ENCODE measurements at regions of chr4 and their contacts with region 1.

Region 1: DNA sequence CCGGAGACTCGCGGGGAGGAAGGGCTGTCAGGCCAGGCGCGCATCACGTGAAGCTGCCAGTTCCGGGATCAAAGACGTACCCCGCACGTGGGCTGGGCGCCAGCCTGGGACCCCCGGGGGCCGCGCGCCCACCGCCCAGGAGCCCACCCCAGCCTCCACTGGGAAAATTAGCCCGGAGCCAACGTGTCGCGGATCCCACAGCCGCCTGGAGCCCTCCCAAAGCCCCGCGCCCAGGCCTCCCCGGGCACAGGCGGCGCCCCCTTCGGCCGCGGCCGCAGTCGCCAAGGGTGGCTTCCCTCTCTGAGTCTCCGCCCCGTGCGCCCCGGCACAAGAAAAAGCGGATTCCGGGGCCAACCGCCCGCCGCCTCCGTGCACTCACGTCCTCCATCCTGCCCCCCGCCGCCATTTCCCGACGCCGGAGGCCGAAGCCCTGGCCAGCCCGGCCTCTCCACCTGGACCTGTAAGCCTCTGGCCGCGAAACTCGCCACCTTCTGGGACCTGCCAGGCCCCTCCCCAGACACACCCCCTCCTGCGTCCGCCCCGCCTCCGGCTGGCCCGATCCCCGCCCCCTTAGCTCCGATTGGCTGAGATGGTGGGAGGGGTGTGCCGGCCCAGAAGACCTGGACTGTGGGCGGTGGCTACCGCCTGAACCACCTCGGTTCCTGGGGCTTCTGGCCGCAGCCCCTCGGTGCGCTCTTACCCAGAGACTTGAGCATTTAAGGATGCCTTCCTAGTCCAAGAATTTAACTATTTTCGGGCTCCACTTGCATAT is at the start of gene TMEM192:
- DNase-seq: peak; percentile 92
- H3K4me3 Mint-ChIP-seq: peak within 1 kb of the TSS; percentile 85
- H3K27ac Mint-ChIP-seq: peak within 1 kb of the TSS; percentile 79
- H3K4me1 Mint-ChIP-seq: peaks cover 18% of the 10 kb centered on the region
- H3K27me3 Mint-ChIP-seq: peaks cover 11% of the 10 kb centered on the region
- total RNA-seq, gene TMEM192: 6.2 to 6.4 TPM

Region 2: GRCh38 chr4:164997324-164997723 is 115.2 kb before region 1 on chr4:
- CTCF ChIA-PET with region 1: no interaction called
- POLR2A ChIA-PET with region 1: no interaction called
- DNase-seq: no peak
- H3K4me3 Mint-ChIP-seq: no peak overlapping the region
- H3K27ac Mint-ChIP-seq: no peak overlapping the region
- H3K4me1 Mint-ChIP-seq: no peaks in the 10 kb centered on the region
- H3K27me3 Mint-ChIP-seq: peaks cover 19% of the 10 kb centered on the region

Region 3: GRCh38 chr4:165096776-165097175 is 15.8 kb before region 1 on chr4:
- CTCF ChIA-PET with region 1: interaction called, 17 read pairs
- POLR2A ChIA-PET with region 1: interaction called, 3 read pairs
- DNase-seq: no peak
- H3K4me3 Mint-ChIP-seq: no peak overlapping the region
- H3K27ac Mint-ChIP-seq: no peak overlapping the region
- H3K4me1 Mint-ChIP-seq: no peaks in the 10 kb centered on the region
- H3K27me3 Mint-ChIP-seq: no peaks in the 10 kb centered on the region

Region 4: DNA sequence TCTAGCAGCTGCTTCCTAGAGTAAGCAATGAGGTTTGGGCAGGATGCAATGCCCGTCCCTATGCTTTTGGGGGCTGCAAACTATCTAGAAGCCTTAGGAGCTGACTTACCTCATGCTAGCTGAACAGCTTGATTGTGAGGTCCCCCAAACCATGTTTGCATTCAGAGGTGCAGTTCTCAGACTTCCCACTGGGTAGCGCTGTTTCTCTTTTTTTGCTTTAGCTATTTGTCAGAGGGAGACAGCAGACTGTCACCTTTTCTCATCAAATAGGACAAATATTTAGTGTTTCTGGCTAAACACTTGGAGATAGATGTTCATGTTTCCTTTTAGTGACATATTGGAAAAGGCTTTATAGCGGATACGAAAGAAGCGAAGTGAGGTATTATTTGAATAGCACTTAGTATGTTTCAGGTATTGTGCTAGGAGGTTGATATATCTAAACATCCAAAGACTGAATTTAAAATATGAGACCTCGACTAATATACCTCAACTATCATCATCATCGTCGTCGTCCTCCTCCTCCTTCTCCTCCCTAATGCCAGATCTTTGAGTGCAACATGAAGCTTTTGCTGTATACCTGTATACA is 18.8 kb after region 1 on chr4:
- CTCF ChIA-PET with region 1: interaction called, 21 read pairs
- POLR2A ChIA-PET with region 1: no interaction called
- DNase-seq: peak; percentile 75
- H3K4me3 Mint-ChIP-seq: no peak overlapping the region
- H3K27ac Mint-ChIP-seq: no peak overlapping the region
- H3K4me1 Mint-ChIP-seq: peaks cover 7% of the 10 kb centered on the region
- H3K27me3 Mint-ChIP-seq: peaks cover 27% of the 10 kb centered on the region

Region 5: GRCh38 chr4:165204462-165204830 is 91.9 kb after region 1 on chr4:
- CTCF ChIA-PET with region 1: interaction called, 10 read pairs
- POLR2A ChIA-PET with region 1: no interaction called
- DNase-seq: no peak
- H3K4me3 Mint-ChIP-seq: no peak overlapping the region
- H3K27ac Mint-ChIP-seq: no peak overlapping the region
- H3K4me1 Mint-ChIP-seq: peaks cover 42% of the 10 kb centered on the region
- H3K27me3 Mint-ChIP-seq: no peaks in the 10 kb centered on the region

Region 6: GRCh38 chr4:165327211-165328100 is 214.9 kb after region 1 on chr4 and contains the start of gene MSMO1:
- CTCF ChIA-PET with region 1: interaction called, 10 read pairs
- POLR2A ChIA-PET with region 1: interaction called, 6 read pairs
- DNase-seq: peak; percentile 99
- H3K4me3 Mint-ChIP-seq: no peak within 1 kb of the TSS
- H3K27ac Mint-ChIP-seq: no peak within 1 kb of the TSS
- H3K4me1 Mint-ChIP-seq: peaks cover 26% of the 10 kb centered on the region
- H3K27me3 Mint-ChIP-seq: no peaks in the 10 kb centered on the region
- total RNA-seq, gene MSMO1: 95.1 to 101 TPM

Region 7: DNA sequence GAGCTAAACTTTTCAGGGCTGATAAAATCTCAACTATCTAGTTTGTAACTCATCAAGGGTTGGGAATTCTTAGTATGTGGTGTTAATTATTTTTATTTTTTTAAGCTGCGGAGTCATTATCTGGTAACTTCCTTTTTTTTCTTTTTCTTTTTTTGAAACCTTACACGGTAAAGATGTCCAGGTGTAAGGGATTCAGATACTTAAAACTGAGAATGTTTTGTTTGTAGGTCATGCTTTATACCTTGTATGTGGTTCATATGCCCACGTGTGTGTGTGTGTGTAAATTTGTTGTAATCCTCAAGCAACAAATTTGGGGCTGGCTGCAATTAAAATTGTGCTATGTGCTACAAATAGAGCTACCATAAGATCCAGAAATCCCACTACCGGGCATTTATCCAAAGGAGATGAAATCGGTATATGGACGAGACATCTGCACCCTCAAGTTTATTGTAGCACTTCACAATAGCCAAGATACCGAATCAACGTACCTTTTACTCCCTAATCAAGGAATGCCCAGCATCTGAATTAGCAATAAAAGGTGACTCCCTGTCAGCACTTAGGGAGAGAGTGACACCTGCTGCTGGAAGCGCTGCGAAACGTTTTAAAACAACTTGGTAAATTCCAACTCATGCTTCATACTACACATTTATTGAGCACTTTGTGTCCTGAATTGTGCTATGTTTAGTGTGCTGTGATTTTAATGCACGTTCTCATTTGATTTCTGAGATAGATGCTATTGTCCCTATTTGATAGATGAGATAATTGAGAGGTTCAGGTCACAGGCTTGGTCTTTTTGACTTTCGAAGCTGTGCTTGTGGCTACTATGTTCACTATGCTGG is 231.0 kb after region 1 on chr4:
- CTCF ChIA-PET with region 1: interaction called, 15 read pairs
- POLR2A ChIA-PET with region 1: no interaction called
- DNase-seq: no peak
- H3K4me3 Mint-ChIP-seq: no peak overlapping the region
- H3K27ac Mint-ChIP-seq: no peak overlapping the region
- H3K4me1 Mint-ChIP-seq: no peaks in the 10 kb centered on the region
- H3K27me3 Mint-ChIP-seq: no peaks in the 10 kb centered on the region

Region 8: DNA sequence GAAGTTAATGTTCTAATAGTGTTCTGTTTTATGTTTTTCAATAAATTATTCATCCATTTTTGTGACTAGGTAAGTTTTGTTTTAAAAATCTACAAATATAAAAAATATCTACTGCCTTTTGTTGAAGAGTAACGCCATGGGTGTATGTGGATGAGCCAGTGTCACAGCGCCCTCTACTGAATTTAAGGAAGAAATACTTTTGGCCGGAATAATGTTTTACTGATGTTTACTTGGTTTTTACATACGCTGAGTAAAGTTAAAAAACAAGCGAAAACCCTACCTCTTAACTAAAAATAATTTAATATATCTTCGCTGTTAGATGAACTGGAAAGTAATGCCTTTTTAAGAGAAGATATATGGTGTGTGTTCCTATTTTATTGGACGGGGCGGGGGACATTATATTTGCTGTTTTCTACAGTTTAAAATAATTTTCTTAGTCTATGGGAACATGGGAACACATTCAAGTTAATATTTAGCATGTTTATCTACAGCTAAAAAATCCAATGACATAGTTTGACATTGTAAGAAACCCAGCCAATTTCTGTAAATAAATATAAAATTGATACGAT is 352.3 kb after region 1 on chr4:
- CTCF ChIA-PET with region 1: interaction called, 10 read pairs
- POLR2A ChIA-PET with region 1: no interaction called
- DNase-seq: peak; percentile 18
- H3K4me3 Mint-ChIP-seq: no peak overlapping the region
- H3K27ac Mint-ChIP-seq: no peak overlapping the region
- H3K4me1 Mint-ChIP-seq: no peaks in the 10 kb centered on the region
- H3K27me3 Mint-ChIP-seq: no peaks in the 10 kb centered on the region

Region 9: GRCh38 chr4:165709973-165710526 is 597.5 kb after region 1 on chr4:
- CTCF ChIA-PET with region 1: no interaction called
- POLR2A ChIA-PET with region 1: no interaction called
- DNase-seq: no peak
- H3K4me3 Mint-ChIP-seq: no peak overlapping the region
- H3K27ac Mint-ChIP-seq: no peak overlapping the region
- H3K4me1 Mint-ChIP-seq: no peaks in the 10 kb centered on the region
- H3K27me3 Mint-ChIP-seq: no peaks in the 10 kb centered on the region

Measured in activated CD4-positive, alpha-beta memory T cell treated with anti-CD3 and anti-CD28 coated beads, Interleukin-2, amount 10 ng/mL, durations not matched to agents 7 days and 5 days (primary cell).